PC-9 (cell line): ENCODE measurements at regions of chr12 and their contacts with region 1.

Region 1: DNA sequence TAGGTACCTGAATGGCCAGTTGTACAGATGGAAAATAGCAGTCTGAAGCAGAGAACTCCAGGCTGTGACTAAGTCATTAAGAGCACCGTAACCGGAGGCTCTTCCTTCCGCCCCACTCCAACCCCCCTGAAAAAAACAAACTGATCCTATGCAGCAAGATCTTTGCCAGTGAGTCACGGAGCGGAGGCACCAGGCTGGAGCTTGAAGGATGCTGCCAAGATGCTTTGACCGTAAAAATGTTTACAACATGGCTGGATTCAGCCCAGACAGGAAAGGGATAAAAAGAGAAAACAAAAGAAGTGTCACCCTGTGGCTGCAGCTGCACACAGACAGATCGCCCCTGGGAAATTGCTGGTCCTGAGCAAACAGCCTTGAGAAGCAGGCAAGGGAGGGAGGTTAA is 204.5 kb downstream of the NUAK1 start:
- DNase-seq: peak; percentile 65 to 98
- H3K4me3 ChIP-seq: peak overlapping the region; percentile 20; the same call in 1 of the 2 replicates
- H3K27ac ChIP-seq: peak overlapping the region; percentile 86
- H3K4me1 ChIP-seq: peaks cover 62% of the 10 kb centered on the region
- H3K27me3 ChIP-seq: no peaks in the 10 kb centered on the region
- CTCF ChIP-seq: no peak

Region 2: GRCh38 chr12:105860565-105861207 is 73.6 kb before region 1 on chr12:
- CTCF ChIA-PET with region 1: no interaction called
- POLR2A ChIA-PET with region 1: no interaction called
- intact Hi-C with region 1: loop called (anchors 2 kb)
- DNase-seq: peak in 1 of 2 experiments; percentile 96
- H3K4me3 ChIP-seq: no peak overlapping the region
- H3K27ac ChIP-seq: peak overlapping the region; percentile 70
- H3K4me1 ChIP-seq: peaks cover 41% of the 10 kb centered on the region
- H3K27me3 ChIP-seq: no peaks in the 10 kb centered on the region
- CTCF ChIP-seq: no peak